A549 (cell line): ENCODE measurements at regions of chr2 and their contacts with region 1.

Region 1: DNA sequence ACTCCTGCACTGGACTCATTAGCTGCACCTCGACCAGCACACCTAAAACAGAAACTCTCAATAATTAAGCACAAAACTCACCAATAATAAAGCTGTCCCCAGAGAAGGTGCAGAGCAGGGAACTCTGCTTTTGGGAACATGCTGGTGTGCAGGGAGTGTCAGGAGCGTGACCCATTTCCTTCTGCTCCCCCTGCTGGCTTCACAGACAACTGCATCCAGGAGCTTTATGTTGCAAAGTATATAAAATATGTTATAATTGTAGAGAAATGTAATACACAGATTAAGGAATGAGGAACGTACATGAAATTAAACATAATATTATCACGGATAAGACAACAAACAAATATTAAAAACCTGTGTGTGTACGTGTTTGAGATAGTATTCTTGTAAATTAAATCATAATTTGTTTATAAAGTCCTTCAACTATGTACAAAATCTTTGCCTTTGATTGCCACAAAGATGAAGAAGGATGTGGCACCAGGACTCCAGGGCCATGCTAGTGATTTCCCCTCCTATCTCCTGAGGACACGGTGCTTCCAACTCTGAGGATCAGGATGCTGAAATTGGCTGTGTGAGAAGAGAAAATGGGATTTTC is 68.6 kb upstream of the MAL start:
- DNase-seq: peak; percentile 38 to 43
- ATAC-seq: peak; percentile 77 to 93; a peak in 4 of 6 replicates
- H3K4me3 ChIP-seq: no peak overlapping the region
- H3K27ac ChIP-seq: no peak overlapping the region
- H3K4me1 ChIP-seq: no peaks in the 10 kb centered on the region
- CTCF ChIP-seq: peak; percentile 71
- EP300 ChIP-seq: no peak
- POLR2A ChIP-seq: no peak
- RAD21 ChIP-seq: peak; percentile 46 to 47; a peak in 3 of 5 replicates

Region 2: GRCh38 chr2:94874277-94875008 is 82.5 kb before region 1 on chr2:
- CTCF ChIA-PET with region 1: interaction called, 29 read pairs
- POLR2A ChIA-PET with region 1: no interaction called
- DNase-seq: peak; percentile 58 to 69
- ATAC-seq: peak; percentile 54 to 92; a peak in 3 of 6 replicates
- H3K4me3 ChIP-seq: no peak overlapping the region
- H3K27ac ChIP-seq: no peak overlapping the region
- H3K4me1 ChIP-seq: no peaks in the 10 kb centered on the region; the same call in 2 of the 3 replicates
- CTCF ChIP-seq: peak; percentile 93
- EP300 ChIP-seq: no peak
- POLR2A ChIP-seq: no peak
- RAD21 ChIP-seq: peak; percentile 58 to 65; a peak in 4 of 5 replicates

Region 3: DNA sequence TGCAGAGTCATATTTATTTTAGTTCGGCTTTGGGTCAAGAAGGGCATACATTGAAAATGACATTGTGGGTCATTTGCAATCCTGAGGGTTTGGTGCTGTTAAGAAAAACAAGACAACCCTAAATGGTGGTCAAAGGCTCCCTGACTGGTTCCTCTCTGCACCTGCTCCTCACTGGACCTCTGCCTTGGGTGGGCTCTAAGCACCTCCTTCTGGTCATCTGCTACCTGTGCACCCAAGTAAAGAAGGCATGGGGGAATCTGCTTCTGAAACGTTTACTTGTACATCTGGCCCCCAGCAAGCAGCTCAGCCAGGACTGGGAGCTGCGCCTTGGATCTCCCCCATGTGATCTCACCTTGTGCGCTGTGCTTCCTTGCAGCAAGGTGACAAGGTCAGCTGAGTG is 13.5 kb after region 1 on chr2:
- CTCF ChIA-PET with region 1: interaction called, 13 read pairs
- POLR2A ChIA-PET with region 1: no interaction called
- DNase-seq: no peak
- ATAC-seq: no peak
- H3K4me3 ChIP-seq: no peak overlapping the region
- H3K27ac ChIP-seq: no peak overlapping the region
- H3K4me1 ChIP-seq: no peaks in the 10 kb centered on the region
- CTCF ChIP-seq: no peak
- EP300 ChIP-seq: no peak
- POLR2A ChIP-seq: no peak
- RAD21 ChIP-seq: no peak

Region 4: DNA sequence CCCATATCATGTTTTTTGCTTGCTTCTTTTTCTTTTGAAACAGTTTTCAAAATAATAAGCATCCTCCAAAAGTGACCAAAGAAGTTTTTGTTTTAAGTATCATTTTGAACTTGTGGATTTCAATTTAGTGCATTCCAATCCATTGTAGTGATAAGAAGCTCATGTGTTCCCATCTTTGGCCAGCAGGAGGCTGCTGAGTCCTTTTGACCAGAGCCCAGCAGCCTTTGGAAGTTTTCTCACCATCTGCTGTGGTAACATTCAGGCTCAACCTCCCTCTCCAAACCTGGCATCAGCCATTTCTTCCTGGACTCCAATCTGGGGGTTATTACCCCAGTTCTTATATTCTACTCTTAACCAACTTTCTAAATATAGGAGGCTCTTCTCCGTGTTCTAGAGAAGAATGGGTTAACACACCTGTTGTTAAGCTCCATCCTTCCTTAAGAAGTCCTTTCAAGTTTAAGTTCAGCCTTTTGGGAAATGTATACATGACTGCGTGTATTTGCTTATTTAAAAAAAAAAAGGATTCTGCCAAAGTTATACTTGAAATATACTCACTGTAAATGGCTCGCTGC is 29.6 kb after region 1 on chr2:
- CTCF ChIA-PET with region 1: interaction called, 20 read pairs
- POLR2A ChIA-PET with region 1: no interaction called
- DNase-seq: peak; percentile 61 to 71
- ATAC-seq: peak; percentile 69 to 93; a peak in 3 of 6 replicates
- H3K4me3 ChIP-seq: no peak overlapping the region
- H3K27ac ChIP-seq: no peak overlapping the region
- H3K4me1 ChIP-seq: no peaks in the 10 kb centered on the region
- CTCF ChIP-seq: peak; percentile 56
- EP300 ChIP-seq: no peak
- POLR2A ChIP-seq: no peak
- RAD21 ChIP-seq: peak; percentile 37 to 60; a peak in 4 of 5 replicates

Region 5: GRCh38 chr2:94996305-94997100 is 39.6 kb after region 1 on chr2:
- CTCF ChIA-PET with region 1: interaction called, 12 read pairs
- POLR2A ChIA-PET with region 1: no interaction called
- DNase-seq: no peak
- ATAC-seq: no peak
- H3K4me3 ChIP-seq: no peak overlapping the region
- H3K27ac ChIP-seq: no peak overlapping the region
- H3K4me1 ChIP-seq: no peaks in the 10 kb centered on the region
- CTCF ChIP-seq: no peak
- EP300 ChIP-seq: no peak
- POLR2A ChIP-seq: no peak
- RAD21 ChIP-seq: no peak